SK-N-SH (cell line): ENCODE measurements at regions of chr22 and their contacts with region 1.

Region 1: GRCh38 chr22:22959147-22959827 is 71.7 kb downstream of the IGLL5 start:
- DNase-seq: peak; percentile 73
- H3K4me3 ChIP-seq: no peak overlapping the region; a peak in 1 of 4 replicates
- H3K27ac ChIP-seq: no peak overlapping the region
- H3K4me1 ChIP-seq: peaks cover 0 to 2% of the 10 kb centered on the region in 2 experiments; a peak in 1 of 4 replicates
- H3K27me3 ChIP-seq: no peaks in the 10 kb centered on the region
- CTCF ChIP-seq: peak; percentile 98
- EP300 ChIP-seq: no peak
- RAD21 ChIP-seq: peak; percentile 100

Region 2: GRCh38 chr22:22463855-22464540 is 495.3 kb before region 1 on chr22:
- CTCF ChIA-PET with region 1: interaction called, 43 read pairs
- POLR2A ChIA-PET with region 1: no interaction called
- DNase-seq: peak; percentile 67
- H3K4me3 ChIP-seq: peak overlapping the region in 1 of 2 experiments; percentile 20; a peak in 1 of 4 replicates
- H3K27ac ChIP-seq: no peak overlapping the region
- H3K4me1 ChIP-seq: peaks cover 0 to 2% of the 10 kb centered on the region in 2 experiments; a peak in 1 of 4 replicates
- H3K27me3 ChIP-seq: peaks cover 6% of the 10 kb centered on the region; the same call in 1 of the 2 replicates
- CTCF ChIP-seq: peak; percentile 84
- EP300 ChIP-seq: no peak
- RAD21 ChIP-seq: peak; percentile 93

Region 3: DNA sequence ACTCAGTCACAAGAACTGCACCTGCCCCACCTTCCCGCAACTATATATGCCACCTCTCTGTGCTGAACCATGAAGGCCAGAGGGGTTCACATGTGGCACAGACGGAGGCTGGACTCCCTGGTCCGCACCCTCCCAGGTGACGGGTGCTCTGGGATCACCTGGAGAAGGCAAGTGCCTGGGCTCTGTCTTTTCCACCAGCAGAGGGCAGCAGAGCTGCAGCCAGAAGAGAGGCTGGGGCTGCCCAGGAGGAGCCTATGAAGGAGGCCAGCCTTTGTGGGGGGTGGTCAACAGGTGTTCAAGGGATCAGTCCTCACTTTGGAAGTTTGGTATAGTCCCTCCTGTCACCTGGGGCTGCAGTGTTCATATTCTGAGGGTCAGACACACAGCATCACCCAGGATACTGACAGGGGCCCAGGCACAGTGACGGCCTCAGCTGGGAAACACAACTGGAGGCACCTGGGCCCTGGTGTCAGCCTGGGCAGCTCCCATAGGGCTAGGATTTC is 110.9 kb before region 1 on chr22:
- CTCF ChIA-PET with region 1: interaction called, 257 read pairs
- POLR2A ChIA-PET with region 1: no interaction called
- DNase-seq: peak; percentile 63
- H3K4me3 ChIP-seq: peak overlapping the region in 1 of 2 experiments; percentile 31; a peak in 1 of 4 replicates
- H3K27ac ChIP-seq: no peak overlapping the region
- H3K4me1 ChIP-seq: no peaks in the 10 kb centered on the region
- H3K27me3 ChIP-seq: no peaks in the 10 kb centered on the region; the same call in 1 of the 2 replicates
- CTCF ChIP-seq: peak; percentile 93
- EP300 ChIP-seq: no peak
- RAD21 ChIP-seq: peak; percentile 78

Region 4: GRCh38 chr22:22894740-22895731 is 64.3 kb before region 1 on chr22:
- CTCF ChIA-PET with region 1: no interaction called
- POLR2A ChIA-PET with region 1: no interaction called
- DNase-seq: no peak
- H3K4me3 ChIP-seq: no peak overlapping the region
- H3K27ac ChIP-seq: no peak overlapping the region
- H3K4me1 ChIP-seq: no peaks in the 10 kb centered on the region
- H3K27me3 ChIP-seq: no peaks in the 10 kb centered on the region
- CTCF ChIP-seq: no peak
- EP300 ChIP-seq: no peak
- RAD21 ChIP-seq: no peak

Region 5: DNA sequence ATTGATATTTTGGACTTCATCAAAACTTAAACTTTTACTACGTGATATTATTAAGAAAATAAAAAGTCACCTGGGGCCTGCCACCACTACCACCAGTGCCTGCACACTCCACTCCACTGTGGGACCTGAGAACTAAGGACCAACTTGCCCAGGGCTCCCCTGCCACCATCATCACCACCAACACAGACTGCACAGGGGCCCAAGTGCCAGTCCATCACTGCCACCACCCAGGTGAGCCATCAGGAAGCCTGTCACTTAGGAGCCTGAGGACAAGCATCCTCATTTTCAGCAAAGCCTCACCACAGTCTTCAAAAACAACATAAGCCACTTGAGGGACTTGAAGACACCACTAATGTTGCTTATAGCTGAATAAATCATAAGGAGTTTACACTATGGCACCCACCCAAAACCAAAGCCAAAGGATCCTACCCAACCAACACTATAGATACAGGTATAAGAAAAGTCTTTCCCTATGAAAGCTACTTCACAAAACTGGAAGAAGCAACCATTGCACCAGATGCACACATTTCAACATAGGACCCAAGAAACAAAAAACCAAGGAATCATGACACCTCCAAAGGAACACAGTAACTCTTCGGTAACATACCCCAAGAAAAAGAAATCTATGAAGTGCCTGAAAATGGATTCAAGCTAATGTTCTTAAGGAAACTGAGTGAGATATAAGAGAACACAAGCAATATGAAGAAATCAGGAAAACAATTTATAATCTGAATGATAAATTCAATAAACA is 37.4 kb after region 1 on chr22:
- CTCF ChIA-PET with region 1: interaction called, 13 read pairs
- POLR2A ChIA-PET with region 1: no interaction called
- DNase-seq: no peak
- H3K4me3 ChIP-seq: no peak overlapping the region
- H3K27ac ChIP-seq: no peak overlapping the region
- H3K4me1 ChIP-seq: no peaks in the 10 kb centered on the region
- H3K27me3 ChIP-seq: no peaks in the 10 kb centered on the region
- CTCF ChIP-seq: no peak
- EP300 ChIP-seq: no peak
- RAD21 ChIP-seq: no peak

Region 6: DNA sequence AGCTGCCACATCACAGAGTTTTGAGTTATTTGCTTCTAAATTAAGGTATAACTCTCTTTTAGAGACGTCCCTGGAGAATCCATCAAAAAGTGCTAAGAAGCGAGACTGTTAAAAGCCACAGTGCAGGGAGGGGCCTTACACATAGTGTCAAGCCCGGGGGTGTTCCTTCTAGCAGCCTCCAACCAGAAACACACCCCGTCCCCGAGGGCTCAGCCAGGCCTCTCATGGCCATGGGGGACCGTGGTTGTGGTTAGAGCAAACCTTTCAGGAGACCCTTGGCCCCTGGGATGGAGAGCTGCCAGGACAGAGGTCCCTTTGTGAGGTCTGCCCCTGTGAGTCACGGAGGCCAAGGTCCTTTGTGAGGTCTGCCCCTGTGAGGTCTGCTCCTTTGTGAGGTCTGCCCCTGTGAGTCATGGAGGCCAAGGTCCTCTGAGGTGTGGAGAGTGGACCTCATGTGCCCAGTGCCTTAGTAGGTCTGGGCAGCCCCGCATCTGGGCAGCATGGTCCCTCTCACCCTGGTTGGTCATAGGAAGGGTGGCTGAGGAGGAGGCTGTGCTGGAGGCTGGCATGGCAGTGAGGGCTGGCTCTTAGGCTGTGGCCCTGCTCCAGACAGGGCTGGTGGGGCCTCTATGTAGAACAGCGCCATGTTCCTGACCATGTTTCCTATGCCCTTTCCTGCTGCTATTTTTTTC is 116.4 kb after region 1 on chr22:
- CTCF ChIA-PET with region 1: interaction called, 16 read pairs
- POLR2A ChIA-PET with region 1: no interaction called
- DNase-seq: no peak
- H3K4me3 ChIP-seq: no peak overlapping the region
- H3K27ac ChIP-seq: no peak overlapping the region
- H3K4me1 ChIP-seq: peaks cover 0 to 57% of the 10 kb centered on the region in 2 experiments; a peak in 1 of 4 replicates
- H3K27me3 ChIP-seq: no peaks in the 10 kb centered on the region
- CTCF ChIP-seq: no peak
- EP300 ChIP-seq: no peak
- RAD21 ChIP-seq: no peak

Region 7: GRCh38 chr22:23086787-23087186 is 127.5 kb after region 1 on chr22:
- CTCF ChIA-PET with region 1: no interaction called
- POLR2A ChIA-PET with region 1: no interaction called
- DNase-seq: no peak
- H3K4me3 ChIP-seq: no peak overlapping the region
- H3K27ac ChIP-seq: no peak overlapping the region
- H3K4me1 ChIP-seq: no peaks in the 10 kb centered on the region; a peak in 1 of 4 replicates
- H3K27me3 ChIP-seq: no peaks in the 10 kb centered on the region
- CTCF ChIP-seq: no peak
- EP300 ChIP-seq: no peak
- RAD21 ChIP-seq: no peak

Region 8: GRCh38 chr22:23137905-23138561 is 178.7 kb after region 1 on chr22:
- CTCF ChIA-PET with region 1: interaction called, 397 read pairs
- POLR2A ChIA-PET with region 1: no interaction called
- DNase-seq: no peak
- H3K4me3 ChIP-seq: no peak overlapping the region
- H3K27ac ChIP-seq: no peak overlapping the region
- H3K4me1 ChIP-seq: peaks cover 6 to 9% of the 10 kb centered on the region in 2 experiments; a peak in 1 of 4 replicates
- H3K27me3 ChIP-seq: no peaks in the 10 kb centered on the region
- CTCF ChIP-seq: no peak
- EP300 ChIP-seq: no peak
- RAD21 ChIP-seq: no peak